Endothelial cell of umbilical vein (primary cell): ENCODE measurements at regions of chr12 and their contacts with region 1.

Region 1: GRCh38 chr12:31506515-31507306 is 84.2 kb downstream of the DENND5B start:
- DNase-seq: peak; percentile 72
- H3K4me3 ChIP-seq: no peak overlapping the region
- H3K27ac ChIP-seq: peak overlapping the region; percentile 82
- H3K4me1 ChIP-seq: peaks cover 24% of the 10 kb centered on the region
- H3K27me3 ChIP-seq: no peaks in the 10 kb centered on the region
- CTCF ChIP-seq: no peak
- POLR2A ChIP-seq: no peak

Region 2: DNA sequence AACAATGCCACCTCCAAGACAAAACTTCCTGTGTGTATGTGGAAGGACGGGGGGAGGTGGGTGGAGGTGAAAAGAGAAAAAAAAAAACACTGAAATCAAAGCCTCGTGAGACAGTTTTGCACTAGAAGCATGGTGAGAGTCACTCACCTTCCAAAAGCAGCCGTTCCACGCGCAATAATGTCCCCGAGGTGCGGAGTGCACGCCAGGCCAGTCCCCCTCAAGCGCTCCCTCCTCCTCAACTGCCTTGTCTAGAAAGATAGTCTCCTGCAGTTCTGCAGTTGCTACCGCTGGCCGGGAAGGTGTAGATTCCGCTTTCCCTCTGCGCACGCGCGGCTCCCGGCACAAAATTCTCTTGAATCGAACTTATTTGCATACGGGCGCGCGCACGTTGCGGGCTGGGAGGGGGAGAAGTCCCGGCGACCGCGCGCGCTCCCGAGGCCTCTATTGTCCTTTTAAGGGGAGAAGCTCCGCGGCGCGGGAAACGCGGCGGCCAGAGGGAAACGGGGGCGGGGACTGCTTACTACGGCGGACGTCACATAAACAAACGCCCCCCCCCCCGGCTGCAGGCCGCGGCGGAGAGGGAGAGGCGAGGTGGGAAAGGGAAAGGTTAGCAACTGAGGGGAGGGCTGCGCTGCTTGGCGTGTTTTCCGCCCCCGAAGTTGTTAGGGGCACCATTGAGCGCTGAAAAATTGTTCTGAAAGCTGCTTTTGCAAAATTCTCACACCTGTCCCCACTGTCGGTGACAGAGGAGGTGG is 180.7 kb before region 1 on chr12 and contains the start of gene SINHCAF:
- CTCF ChIA-PET with region 1: no interaction called
- POLR2A ChIA-PET with region 1: no interaction called
- dilution Hi-C with region 1: no loop called
- intact Hi-C with region 1: loop called (anchors 5 kb)
- DNase-seq: peak; percentile 99
- H3K4me3 ChIP-seq: peak within 1 kb of the TSS; percentile 53 to 98 (median 97)
- H3K27ac ChIP-seq: peak within 1 kb of the TSS; percentile 88
- H3K4me1 ChIP-seq: peaks cover 25% of the 10 kb centered on the region
- H3K27me3 ChIP-seq: peaks cover 0 to 12% of the 10 kb centered on the region in 2 experiments
- CTCF ChIP-seq: no peak
- POLR2A ChIP-seq: peak; percentile 97
- total RNA-seq, gene SINHCAF: 73.5 and 83.4 TPM in 2 replicates

Region 3: GRCh38 chr12:31444736-31445135 is 62.0 kb before region 1 on chr12:
- CTCF ChIA-PET with region 1: no interaction called
- POLR2A ChIA-PET with region 1: no interaction called
- dilution Hi-C with region 1: no loop called
- intact Hi-C with region 1: no loop called
- DNase-seq: no peak
- H3K4me3 ChIP-seq: no peak overlapping the region
- H3K27ac ChIP-seq: no peak overlapping the region
- H3K4me1 ChIP-seq: no peaks in the 10 kb centered on the region
- H3K27me3 ChIP-seq: no peaks in the 10 kb centered on the region
- CTCF ChIP-seq: no peak
- POLR2A ChIP-seq: no peak

Region 4: GRCh38 chr12:31491819-31492598 is 14.7 kb before region 1 on chr12:
- CTCF ChIA-PET with region 1: interaction called, 9 read pairs
- POLR2A ChIA-PET with region 1: no interaction called
- dilution Hi-C with region 1: no loop called
- intact Hi-C with region 1: loop called (anchors 2 kb)
- DNase-seq: peak; percentile 94
- H3K4me3 ChIP-seq: peak overlapping the region in 1 of 3 experiments; percentile 26
- H3K27ac ChIP-seq: peak overlapping the region; percentile 90
- H3K4me1 ChIP-seq: peaks cover 26% of the 10 kb centered on the region
- H3K27me3 ChIP-seq: no peaks in the 10 kb centered on the region
- CTCF ChIP-seq: no peak
- POLR2A ChIP-seq: no peak

Region 5: GRCh38 chr12:31518680-31519227 is 12.0 kb after region 1 on chr12:
- CTCF ChIA-PET with region 1: interaction called, 12 read pairs
- POLR2A ChIA-PET with region 1: interaction called, 7 read pairs
- dilution Hi-C with region 1: no loop called
- intact Hi-C with region 1: loop called (anchors 1 kb)
- DNase-seq: peak; percentile 99
- H3K4me3 ChIP-seq: no peak overlapping the region
- H3K27ac ChIP-seq: peak overlapping the region; percentile 97
- H3K4me1 ChIP-seq: peaks cover 41% of the 10 kb centered on the region
- H3K27me3 ChIP-seq: no peaks in the 10 kb centered on the region
- CTCF ChIP-seq: no peak
- POLR2A ChIP-seq: no peak

Region 6: DNA sequence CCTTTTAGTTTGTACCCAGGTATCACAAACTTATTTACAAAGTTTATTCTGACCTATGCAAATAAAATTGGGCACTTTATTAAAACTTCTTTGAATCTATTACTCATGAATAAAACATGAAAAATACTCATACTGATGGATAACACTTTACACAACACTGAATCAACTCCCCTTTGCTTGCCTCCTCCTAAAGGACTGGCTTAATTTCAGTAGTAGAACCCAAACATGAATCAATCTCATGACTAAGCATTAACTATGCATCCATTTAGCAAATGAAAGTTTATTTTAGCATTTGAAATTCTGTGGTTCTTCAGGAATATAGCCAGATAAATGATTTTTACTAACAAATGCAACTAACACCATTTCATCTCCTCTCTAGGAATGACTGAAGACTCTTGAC is 51.8 kb after region 1 on chr12:
- CTCF ChIA-PET with region 1: no interaction called
- POLR2A ChIA-PET with region 1: no interaction called
- dilution Hi-C with region 1: no loop called
- intact Hi-C with region 1: no loop called
- DNase-seq: no peak
- H3K4me3 ChIP-seq: no peak overlapping the region
- H3K27ac ChIP-seq: no peak overlapping the region
- H3K4me1 ChIP-seq: no peaks in the 10 kb centered on the region
- H3K27me3 ChIP-seq: no peaks in the 10 kb centered on the region
- CTCF ChIP-seq: no peak
- POLR2A ChIP-seq: no peak